CD8-positive, alpha-beta T cell (primary cell): ENCODE measurements at regions of chr2 and their contacts with region 1.

Region 1: DNA sequence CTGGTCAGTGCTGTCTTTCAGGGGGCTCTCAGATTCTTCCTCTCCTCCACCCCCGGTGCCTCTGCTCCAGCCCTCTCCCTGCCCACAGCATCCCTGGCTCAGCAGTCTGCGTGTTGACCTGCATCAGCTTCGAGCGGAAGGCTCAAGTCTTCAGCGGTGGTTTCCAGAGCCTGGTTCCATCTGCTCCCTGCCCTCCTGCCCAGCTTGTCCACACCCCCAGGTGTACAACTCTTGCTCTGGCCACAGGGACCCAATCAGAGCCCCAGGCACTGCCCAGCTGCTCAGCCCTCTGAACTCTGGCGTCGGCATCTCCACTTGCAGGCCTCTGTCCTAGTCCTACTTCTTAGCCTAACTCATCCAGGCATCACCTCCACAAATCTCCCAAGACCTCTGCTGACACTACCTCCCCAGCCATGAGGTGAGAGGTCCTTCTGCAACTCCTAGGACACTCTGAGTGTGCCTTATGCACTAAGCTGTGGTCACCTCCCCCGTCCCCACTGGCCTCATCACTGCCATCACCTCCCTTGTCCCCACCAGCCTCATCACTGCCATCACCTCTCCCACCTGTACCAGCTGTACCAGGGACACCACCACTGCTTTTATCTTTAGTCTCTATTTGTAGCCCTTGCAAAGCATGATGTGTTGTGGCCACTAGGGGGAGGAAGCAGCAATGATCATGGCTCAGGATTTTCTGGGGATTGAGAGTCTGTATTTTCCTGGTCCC is 60.9 kb downstream of the EDAR start:
- DNase-seq: peak in 8 of 9 experiments; percentile 11 to 69 (median 48)
- ATAC-seq: peak; percentile 49
- H3K4me3 ChIP-seq: no peak overlapping the region
- H3K4me3 Mint-ChIP-seq: no peak overlapping the region
- H3K27ac ChIP-seq: no peak overlapping the region
- H3K27ac Mint-ChIP-seq: no peak overlapping the region
- H3K4me1 ChIP-seq: peaks cover 5% of the 10 kb centered on the region
- H3K4me1 Mint-ChIP-seq: peaks cover 9% of the 10 kb centered on the region
- H3K27me3 ChIP-seq: no peaks in the 10 kb centered on the region
- H3K27me3 Mint-ChIP-seq: no peaks in the 10 kb centered on the region
- CTCF ChIP-seq: peak; percentile 97

Region 2: GRCh38 chr2:108855194-108855593 is 72.9 kb before region 1 on chr2:
- CTCF ChIA-PET with region 1: interaction called, 4 read pairs
- POLR2A ChIA-PET with region 1: no interaction called
- intact Hi-C with region 1: loop called in 1 of 2 experiments (anchors 5 kb)
- DNase-seq: peak in 2 of 9 experiments; percentile 32 to 57
- ATAC-seq: peak; percentile 61
- H3K4me3 ChIP-seq: no peak overlapping the region
- H3K4me3 Mint-ChIP-seq: no peak overlapping the region
- H3K27ac ChIP-seq: no peak overlapping the region
- H3K27ac Mint-ChIP-seq: no peak overlapping the region
- H3K4me1 ChIP-seq: no peaks in the 10 kb centered on the region
- H3K4me1 Mint-ChIP-seq: peaks cover 4% of the 10 kb centered on the region
- H3K27me3 ChIP-seq: no peaks in the 10 kb centered on the region
- H3K27me3 Mint-ChIP-seq: no peaks in the 10 kb centered on the region
- CTCF ChIP-seq: peak; percentile 61

Region 3: DNA sequence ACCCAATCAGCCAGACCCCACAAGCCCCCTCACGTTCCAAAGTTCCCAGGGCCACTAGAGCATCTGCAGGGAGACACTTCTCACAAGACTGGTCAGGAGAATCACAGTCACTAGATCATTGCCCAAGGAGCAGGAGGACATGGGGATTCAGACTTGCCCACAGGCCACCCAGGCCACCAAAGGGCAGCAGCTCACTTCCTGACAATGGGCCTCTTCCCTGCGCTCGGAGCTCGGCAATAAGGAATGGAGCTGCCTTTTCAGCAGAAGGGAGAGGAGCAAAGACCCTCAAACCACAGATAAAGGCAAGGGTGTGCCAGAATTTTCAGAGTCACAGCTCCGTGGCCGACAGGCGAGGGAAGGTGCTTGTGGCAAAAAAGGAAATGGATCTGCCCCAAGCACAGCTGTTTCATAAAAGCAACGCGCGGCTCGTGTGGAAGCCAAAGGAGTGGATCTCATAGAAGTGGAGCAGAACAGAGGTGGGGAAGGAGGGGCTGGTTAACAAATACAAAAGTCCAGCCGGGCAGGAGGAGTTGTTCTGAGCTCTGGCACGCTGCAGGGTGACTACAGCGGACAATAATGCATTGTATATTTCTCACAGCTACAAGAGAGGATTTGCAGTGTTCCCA is 11.2 kb before region 1 on chr2:
- CTCF ChIA-PET with region 1: interaction called, 24 read pairs
- POLR2A ChIA-PET with region 1: interaction called, 3 read pairs
- intact Hi-C with region 1: no loop called
- DNase-seq: no peak
- ATAC-seq: no peak
- H3K4me3 ChIP-seq: no peak overlapping the region
- H3K4me3 Mint-ChIP-seq: no peak overlapping the region
- H3K27ac ChIP-seq: no peak overlapping the region
- H3K27ac Mint-ChIP-seq: peak overlapping the region; percentile 32
- H3K4me1 ChIP-seq: no peaks in the 10 kb centered on the region
- H3K4me1 Mint-ChIP-seq: peaks cover 12% of the 10 kb centered on the region
- H3K27me3 ChIP-seq: no peaks in the 10 kb centered on the region
- H3K27me3 Mint-ChIP-seq: no peaks in the 10 kb centered on the region
- CTCF ChIP-seq: no peak

Region 4: GRCh38 chr2:108968619-108969018 is 40.5 kb after region 1 on chr2:
- CTCF ChIA-PET with region 1: interaction called, 7 read pairs
- POLR2A ChIA-PET with region 1: interaction called, 3 read pairs
- intact Hi-C with region 1: loop called in 1 of 2 experiments (anchors 5 kb)
- DNase-seq: no peak
- ATAC-seq: no peak
- H3K4me3 ChIP-seq: no peak overlapping the region
- H3K4me3 Mint-ChIP-seq: no peak overlapping the region
- H3K27ac ChIP-seq: no peak overlapping the region
- H3K27ac Mint-ChIP-seq: no peak overlapping the region
- H3K4me1 ChIP-seq: peaks cover 70% of the 10 kb centered on the region
- H3K4me1 Mint-ChIP-seq: peaks cover 88% of the 10 kb centered on the region
- H3K27me3 ChIP-seq: no peaks in the 10 kb centered on the region
- H3K27me3 Mint-ChIP-seq: no peaks in the 10 kb centered on the region
- CTCF ChIP-seq: no peak

Region 5: DNA sequence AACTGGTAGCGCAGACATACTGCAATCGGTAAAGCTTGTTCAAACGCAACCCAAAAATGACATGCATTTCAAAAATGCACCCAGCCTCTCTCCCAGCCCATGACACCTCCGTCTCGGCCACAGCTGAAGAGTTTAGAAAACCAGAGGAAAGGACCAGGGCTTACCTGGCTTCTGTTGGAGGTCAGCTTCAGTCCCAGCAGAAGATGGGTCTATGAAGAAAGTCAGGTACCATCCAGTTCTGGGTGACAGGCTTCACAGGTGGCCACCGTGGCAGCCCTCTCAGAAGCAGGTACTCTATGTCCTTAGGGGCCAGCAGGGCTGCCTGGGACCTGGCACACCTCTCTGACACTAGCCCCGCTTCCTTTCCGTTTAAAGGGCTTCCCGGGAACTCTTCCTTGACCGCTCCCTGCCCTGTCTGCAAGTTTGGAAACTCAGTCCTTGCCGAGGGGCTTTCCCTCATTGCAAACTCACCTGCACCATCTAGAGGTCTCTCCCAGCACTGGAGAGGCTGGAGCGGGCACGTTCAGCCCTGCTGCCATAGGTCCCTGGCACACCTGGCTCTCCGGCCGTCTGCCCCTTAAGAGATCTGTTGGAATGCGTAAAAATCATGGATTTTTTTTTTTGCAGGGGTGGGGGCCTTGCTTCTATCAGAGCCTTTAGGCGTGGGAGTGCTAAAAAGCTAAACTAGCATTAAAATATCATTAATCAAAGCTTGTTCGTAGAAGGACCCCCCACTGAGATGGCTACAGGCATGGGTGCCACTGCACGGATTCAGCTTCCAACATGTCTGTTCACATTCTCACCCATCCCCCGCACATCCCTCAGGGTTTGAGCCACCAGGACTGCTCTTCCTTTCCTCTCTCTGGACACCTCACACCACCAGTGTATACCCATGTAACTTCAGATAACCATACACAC is 61.0 kb after region 1 on chr2 and contains the start of gene EDAR:
- CTCF ChIA-PET with region 1: interaction called, 124 read pairs
- POLR2A ChIA-PET with region 1: interaction called, 3 read pairs
- intact Hi-C with region 1: loop called (anchors 1 kb)
- DNase-seq: peak in 8 of 9 experiments; percentile 11 to 75 (median 54)
- ATAC-seq: peak; percentile 64
- H3K4me3 ChIP-seq: peak within 1 kb of the TSS; percentile 30 to 35
- H3K4me3 Mint-ChIP-seq: peak within 1 kb of the TSS; percentile 85
- H3K27ac ChIP-seq: no peak within 1 kb of the TSS
- H3K27ac Mint-ChIP-seq: peak within 1 kb of the TSS; percentile 88
- H3K4me1 ChIP-seq: peaks cover 32% of the 10 kb centered on the region
- H3K4me1 Mint-ChIP-seq: peaks cover 70% of the 10 kb centered on the region
- H3K27me3 ChIP-seq: no peaks in the 10 kb centered on the region
- H3K27me3 Mint-ChIP-seq: no peaks in the 10 kb centered on the region
- CTCF ChIP-seq: peak; percentile 51
- total RNA-seq, gene EDAR: 1.6 to 2.0 TPM

Region 6: DNA sequence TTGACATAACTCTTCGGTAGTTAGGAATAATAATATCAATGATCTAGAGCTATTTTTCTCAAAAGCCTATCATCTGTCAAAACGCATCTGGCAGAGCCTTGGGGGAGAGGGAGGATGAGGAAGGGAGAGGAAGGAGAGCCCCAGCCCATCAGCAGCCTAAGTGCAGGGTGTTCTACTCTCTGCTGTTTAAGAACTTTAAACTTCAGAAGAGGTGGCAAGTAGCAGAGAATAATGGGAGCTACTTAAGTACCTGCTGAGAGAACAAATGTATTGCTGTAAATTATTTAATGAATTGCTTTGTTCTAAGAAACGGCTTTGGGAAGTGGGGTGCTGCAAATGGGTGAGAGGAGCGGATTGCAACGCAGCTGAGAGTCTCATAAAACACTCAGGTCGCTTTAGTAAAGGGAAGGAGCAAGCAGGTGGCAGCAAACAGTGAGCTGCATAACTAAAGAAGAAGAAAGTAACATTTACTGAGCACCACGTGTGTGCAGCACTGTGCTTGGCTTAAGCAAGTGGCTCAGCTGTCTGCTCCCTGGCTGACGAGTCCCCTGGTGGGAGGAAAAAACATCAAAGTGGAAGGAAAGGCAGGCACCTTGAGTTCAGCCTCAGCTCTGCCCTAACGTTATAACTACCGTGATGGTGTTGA is 174.6 kb after region 1 on chr2:
- CTCF ChIA-PET with region 1: interaction called, 5 read pairs
- POLR2A ChIA-PET with region 1: no interaction called
- intact Hi-C with region 1: loop called in 1 of 2 experiments (anchors 5 kb)
- DNase-seq: peak in 5 of 9 experiments; percentile 20 to 50 (median 28)
- ATAC-seq: peak; percentile 48
- H3K4me3 ChIP-seq: no peak overlapping the region
- H3K4me3 Mint-ChIP-seq: peak overlapping the region; percentile 57
- H3K27ac ChIP-seq: no peak overlapping the region
- H3K27ac Mint-ChIP-seq: peak overlapping the region; percentile 69
- H3K4me1 ChIP-seq: peaks cover 12% of the 10 kb centered on the region
- H3K4me1 Mint-ChIP-seq: peaks cover 28% of the 10 kb centered on the region
- H3K27me3 ChIP-seq: no peaks in the 10 kb centered on the region
- H3K27me3 Mint-ChIP-seq: no peaks in the 10 kb centered on the region
- CTCF ChIP-seq: no peak

Region 7: GRCh38 chr2:109510136-109511028 is 582.3 kb after region 1 on chr2:
- CTCF ChIA-PET with region 1: interaction called, 14 read pairs
- POLR2A ChIA-PET with region 1: no interaction called
- intact Hi-C with region 1: loop called in 1 of 2 experiments (anchors 1 kb)
- DNase-seq: peak; percentile 58 to 87 (median 74)
- ATAC-seq: peak; percentile 92
- H3K4me3 ChIP-seq: no peak overlapping the region
- H3K4me3 Mint-ChIP-seq: no peak overlapping the region
- H3K27ac ChIP-seq: no peak overlapping the region
- H3K27ac Mint-ChIP-seq: no peak overlapping the region
- H3K4me1 ChIP-seq: no peaks in the 10 kb centered on the region
- H3K4me1 Mint-ChIP-seq: peaks cover 5% of the 10 kb centered on the region
- H3K27me3 ChIP-seq: no peaks in the 10 kb centered on the region
- H3K27me3 Mint-ChIP-seq: no peaks in the 10 kb centered on the region
- CTCF ChIP-seq: peak; percentile 79